Caco-2 (cell line): ENCODE measurements at regions of chr11 and their contacts with region 1.

Region 1: GRCh38 chr11:109062445-109062844 is 359.5 kb upstream of the C11orf87 start:
- DNase-seq: no peak
- H3K4me3 ChIP-seq: no peak overlapping the region
- H3K4me3 Mint-ChIP-seq: no peak overlapping the region
- H3K27ac Mint-ChIP-seq: no peak overlapping the region
- H3K4me1 ChIP-seq: peaks cover 24% of the 10 kb centered on the region
- H3K4me1 Mint-ChIP-seq: peaks cover 25% of the 10 kb centered on the region
- H3K27me3 ChIP-seq: no peaks in the 10 kb centered on the region
- H3K27me3 Mint-ChIP-seq: no peaks in the 10 kb centered on the region
- CTCF ChIP-seq: no peak

Region 2: DNA sequence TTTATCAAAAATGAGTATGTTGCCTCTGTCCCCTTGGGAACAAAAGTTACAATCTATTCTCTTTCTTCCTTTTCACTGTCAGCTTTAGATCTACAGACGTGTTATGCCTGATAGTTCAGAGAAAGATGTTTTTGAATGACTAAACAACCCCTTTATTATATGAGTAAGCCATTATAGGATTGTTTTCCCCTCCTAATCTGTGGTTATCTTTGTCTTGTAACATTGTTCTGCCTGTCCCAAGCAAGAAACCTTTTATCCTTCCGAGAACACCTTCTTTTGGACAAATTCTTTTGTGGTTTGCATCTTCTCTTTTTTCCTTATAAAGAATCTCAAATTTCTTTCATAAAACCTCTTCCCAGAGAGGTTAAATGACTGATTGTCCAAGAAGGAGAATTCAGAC is 189.1 kb before region 1 on chr11:
- CTCF ChIA-PET with region 1: no interaction called
- POLR2A ChIA-PET with region 1: no interaction called
- intact Hi-C with region 1: no loop called
- DNase-seq: no peak
- H3K4me3 ChIP-seq: no peak overlapping the region
- H3K4me3 Mint-ChIP-seq: no peak overlapping the region
- H3K27ac Mint-ChIP-seq: no peak overlapping the region
- H3K4me1 ChIP-seq: no peaks in the 10 kb centered on the region
- H3K4me1 Mint-ChIP-seq: no peaks in the 10 kb centered on the region
- H3K27me3 ChIP-seq: no peaks in the 10 kb centered on the region
- H3K27me3 Mint-ChIP-seq: no peaks in the 10 kb centered on the region
- CTCF ChIP-seq: no peak

Region 3: DNA sequence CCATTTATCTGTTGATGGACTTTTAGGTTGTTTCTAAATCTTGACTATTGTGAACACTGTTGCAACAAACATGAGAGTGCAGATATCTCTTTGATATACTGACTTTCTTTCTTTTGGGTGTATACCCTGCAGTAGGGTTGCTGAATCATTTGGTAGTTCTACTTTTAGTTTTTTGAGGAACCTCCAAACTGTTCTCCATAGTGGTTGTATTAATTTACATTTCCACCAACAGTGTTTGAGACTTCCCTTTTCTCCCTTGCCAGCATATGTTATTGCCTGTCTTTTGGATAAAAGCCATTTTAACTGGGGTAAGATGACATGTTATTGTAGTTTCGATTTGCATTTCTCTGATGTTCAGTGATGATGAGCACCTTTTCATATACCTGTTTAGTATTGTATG is 67.6 kb before region 1 on chr11:
- CTCF ChIA-PET with region 1: no interaction called
- POLR2A ChIA-PET with region 1: no interaction called
- intact Hi-C with region 1: no loop called
- DNase-seq: no peak
- H3K4me3 ChIP-seq: no peak overlapping the region
- H3K4me3 Mint-ChIP-seq: no peak overlapping the region
- H3K27ac Mint-ChIP-seq: no peak overlapping the region
- H3K4me1 ChIP-seq: no peaks in the 10 kb centered on the region
- H3K4me1 Mint-ChIP-seq: no peaks in the 10 kb centered on the region
- H3K27me3 ChIP-seq: no peaks in the 10 kb centered on the region
- H3K27me3 Mint-ChIP-seq: peaks cover 16% of the 10 kb centered on the region
- CTCF ChIP-seq: no peak

Region 4: DNA sequence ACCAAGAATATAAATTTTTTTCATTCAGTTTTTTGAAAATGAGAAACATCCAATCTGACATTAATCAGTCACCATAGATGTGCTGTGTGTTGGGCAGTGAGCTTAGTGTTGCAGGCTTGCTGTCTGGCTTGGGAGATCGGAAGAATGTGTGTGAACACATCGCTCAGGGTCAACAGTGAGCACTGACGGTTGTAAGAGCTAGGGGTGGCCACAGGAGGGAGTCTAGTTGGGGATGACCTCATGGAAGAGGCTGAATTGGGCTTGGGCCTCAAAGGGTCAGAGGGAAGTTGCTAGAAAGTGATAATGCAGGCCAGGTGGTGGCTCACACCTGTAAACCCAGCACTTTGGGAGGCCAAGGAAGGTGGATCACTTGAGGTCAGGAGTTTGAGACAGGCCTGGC is 22.1 kb before region 1 on chr11:
- CTCF ChIA-PET with region 1: interaction called, 3 read pairs
- POLR2A ChIA-PET with region 1: no interaction called
- intact Hi-C with region 1: loop called (anchors 1 kb)
- DNase-seq: peak; percentile 46 to 51
- H3K4me3 ChIP-seq: no peak overlapping the region
- H3K4me3 Mint-ChIP-seq: no peak overlapping the region
- H3K27ac Mint-ChIP-seq: no peak overlapping the region
- H3K4me1 ChIP-seq: no peaks in the 10 kb centered on the region
- H3K4me1 Mint-ChIP-seq: no peaks in the 10 kb centered on the region
- H3K27me3 ChIP-seq: no peaks in the 10 kb centered on the region
- H3K27me3 Mint-ChIP-seq: peaks cover 5% of the 10 kb centered on the region
- CTCF ChIP-seq: peak; percentile 54 to 59

Region 5: GRCh38 chr11:109405671-109406070 is 343.2 kb after region 1 on chr11:
- CTCF ChIA-PET with region 1: no interaction called
- POLR2A ChIA-PET with region 1: no interaction called
- intact Hi-C with region 1: no loop called
- DNase-seq: no peak
- H3K4me3 ChIP-seq: no peak overlapping the region
- H3K4me3 Mint-ChIP-seq: no peak overlapping the region
- H3K27ac Mint-ChIP-seq: no peak overlapping the region
- H3K4me1 ChIP-seq: no peaks in the 10 kb centered on the region
- H3K4me1 Mint-ChIP-seq: no peaks in the 10 kb centered on the region
- H3K27me3 ChIP-seq: no peaks in the 10 kb centered on the region
- H3K27me3 Mint-ChIP-seq: peaks cover 5% of the 10 kb centered on the region
- CTCF ChIP-seq: no peak